ENCODE measurements at regions of chr6 and their contacts with region 1.

Region 1: GRCh38 chr6:112879920-112880413 is 532.8 kb downstream of the RFPL4B start:
- DNase-seq: no peak
- ATAC-seq: no peak
- H3K4me3 ChIP-seq: no peak overlapping the region
- H3K27ac ChIP-seq: no peak overlapping the region
- H3K4me1 ChIP-seq: peaks cover 11% of the 10 kb centered on the region
- H3K27me3 ChIP-seq: no peaks in the 10 kb centered on the region
- CTCF ChIP-seq: no peak
- POLR2A ChIP-seq: no peak
- RAD21 ChIP-seq: no peak

Region 2: DNA sequence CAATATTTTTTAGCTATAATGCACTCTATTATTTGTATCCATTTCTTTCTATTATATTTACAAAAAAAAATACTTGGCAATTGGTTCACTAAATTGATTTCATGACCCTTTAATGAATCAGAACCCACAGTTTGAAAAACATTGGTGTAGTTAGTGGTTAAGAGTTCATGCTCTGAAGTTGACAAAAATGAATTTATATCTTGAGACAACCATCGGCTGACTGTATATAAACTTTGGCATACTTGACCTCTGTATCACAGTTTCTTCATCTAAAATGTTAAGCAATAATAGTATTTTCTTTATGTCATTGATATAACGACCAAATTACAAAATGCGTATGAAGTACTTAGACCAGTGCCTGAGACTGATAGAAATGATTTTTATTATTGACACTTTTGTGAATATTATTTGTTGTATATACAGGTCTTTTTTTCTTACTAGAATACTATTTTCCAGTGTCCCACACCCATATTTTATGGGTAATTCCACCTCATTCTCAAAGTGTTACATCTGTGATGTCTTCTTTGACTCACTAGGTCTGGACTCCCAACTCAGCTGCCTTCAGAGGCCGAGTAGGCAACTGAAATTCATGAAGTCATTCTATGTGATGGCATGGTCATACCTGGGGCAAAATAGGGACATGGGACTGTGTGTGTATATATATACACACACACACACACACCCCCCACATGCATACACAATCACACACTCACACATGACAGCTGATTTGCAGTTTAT is 73.6 kb before region 1 on chr6:
- CTCF ChIA-PET with region 1: interaction called, 10 read pairs
- POLR2A ChIA-PET with region 1: no interaction called
- dilution Hi-C with region 1: no loop called
- in situ Hi-C with region 1: no loop called
- intact Hi-C with region 1: no loop called
- DNase-seq: peak; percentile 80
- ATAC-seq: peak; percentile 80
- H3K4me3 ChIP-seq: no peak overlapping the region
- H3K27ac ChIP-seq: peak overlapping the region; percentile 47; the same call in 1 of the 2 replicates
- H3K4me1 ChIP-seq: peaks cover 6% of the 10 kb centered on the region
- H3K27me3 ChIP-seq: no peaks in the 10 kb centered on the region
- CTCF ChIP-seq: no peak
- POLR2A ChIP-seq: no peak
- RAD21 ChIP-seq: no peak

Region 3: DNA sequence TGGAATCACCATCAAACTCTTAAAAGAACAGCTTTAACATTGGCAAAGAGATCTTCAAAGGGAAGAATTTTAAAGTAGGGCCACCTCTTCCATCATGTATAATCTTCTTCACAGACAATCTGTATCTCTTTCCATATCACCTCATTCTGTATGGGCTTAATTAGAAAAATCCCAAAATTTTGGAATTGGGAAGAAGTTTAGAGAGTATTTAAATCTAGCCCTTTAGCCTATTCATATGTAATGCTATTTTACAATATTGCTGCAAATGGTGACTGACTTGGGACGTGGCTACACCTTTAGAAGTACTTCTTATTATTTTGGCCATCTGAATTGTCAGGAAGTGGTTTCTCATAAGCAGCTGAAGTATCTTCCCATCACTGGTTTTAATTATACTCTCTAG is 58.5 kb before region 1 on chr6:
- CTCF ChIA-PET with region 1: no interaction called
- POLR2A ChIA-PET with region 1: no interaction called
- dilution Hi-C with region 1: no loop called
- in situ Hi-C with region 1: no loop called
- intact Hi-C with region 1: no loop called
- DNase-seq: no peak
- ATAC-seq: no peak
- H3K4me3 ChIP-seq: no peak overlapping the region
- H3K27ac ChIP-seq: no peak overlapping the region
- H3K4me1 ChIP-seq: no peaks in the 10 kb centered on the region
- H3K27me3 ChIP-seq: no peaks in the 10 kb centered on the region
- CTCF ChIP-seq: no peak
- POLR2A ChIP-seq: no peak
- RAD21 ChIP-seq: no peak

Region 4: DNA sequence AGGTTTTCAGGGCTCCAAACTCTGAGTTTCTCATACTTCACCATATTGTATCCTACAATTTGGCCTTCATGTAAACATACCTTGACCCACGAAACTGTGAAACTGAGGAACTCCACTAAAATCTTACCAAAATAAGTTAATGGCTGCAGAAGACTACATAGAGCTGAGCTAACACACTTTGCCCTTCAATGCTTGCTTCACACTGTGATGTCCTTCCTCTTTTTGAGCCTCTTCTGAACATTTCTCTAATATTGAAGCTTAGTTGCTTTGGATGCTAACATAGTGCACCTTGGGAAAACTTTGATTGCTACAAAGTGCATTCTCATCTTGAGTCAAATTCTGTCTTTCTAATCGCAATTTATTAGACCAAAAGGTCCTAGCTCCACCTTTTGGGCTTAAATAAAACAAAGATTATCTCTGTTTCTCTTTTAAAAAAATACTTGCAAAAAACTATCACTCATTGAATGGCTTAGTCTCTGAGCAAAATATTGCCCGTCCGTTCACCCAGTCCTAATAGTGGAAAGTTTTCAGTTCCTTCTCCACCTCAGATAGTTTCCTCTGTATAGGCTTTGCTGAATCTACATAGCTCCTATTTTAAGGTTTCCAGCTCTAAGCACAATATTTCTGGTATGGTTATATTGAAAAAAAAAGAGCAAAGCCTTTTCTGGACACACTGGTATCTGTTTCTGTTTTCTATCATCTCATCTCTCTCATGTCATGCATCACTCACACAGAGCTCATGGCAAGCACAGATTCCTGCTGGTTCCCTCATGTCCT is 38.2 kb before region 1 on chr6:
- CTCF ChIA-PET with region 1: no interaction called
- POLR2A ChIA-PET with region 1: interaction called, 3 read pairs
- dilution Hi-C with region 1: no loop called
- in situ Hi-C with region 1: no loop called
- intact Hi-C with region 1: loop called (anchors 5 kb)
- DNase-seq: no peak
- ATAC-seq: no peak
- H3K4me3 ChIP-seq: no peak overlapping the region
- H3K27ac ChIP-seq: no peak overlapping the region
- H3K4me1 ChIP-seq: peaks cover 4% of the 10 kb centered on the region
- H3K27me3 ChIP-seq: no peaks in the 10 kb centered on the region
- CTCF ChIP-seq: no peak
- POLR2A ChIP-seq: no peak
- RAD21 ChIP-seq: no peak

Region 5: DNA sequence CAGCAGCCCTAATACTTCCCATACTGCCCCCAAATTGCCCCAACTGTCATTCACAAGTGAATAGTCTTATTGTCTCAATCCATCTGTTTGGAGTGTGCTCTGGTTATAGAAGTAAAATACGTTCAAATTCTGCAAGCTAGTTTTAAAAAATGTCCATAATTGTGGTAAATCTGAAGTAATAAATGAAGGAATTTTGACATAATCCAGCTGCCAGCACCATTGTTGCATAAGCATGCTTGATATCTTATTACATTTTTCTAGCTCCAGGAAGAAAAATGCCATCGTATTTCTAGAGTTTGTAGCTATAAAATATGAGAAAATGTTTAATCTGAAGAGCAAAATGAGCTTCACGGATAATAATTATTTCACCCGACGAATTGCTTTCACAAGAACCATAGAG is 131.8 kb after region 1 on chr6:
- CTCF ChIA-PET with region 1: no interaction called
- POLR2A ChIA-PET with region 1: no interaction called
- dilution Hi-C with region 1: no loop called
- in situ Hi-C with region 1: no loop called
- intact Hi-C with region 1: loop called (anchors 5 kb)
- DNase-seq: peak; percentile 61
- ATAC-seq: no peak
- H3K4me3 ChIP-seq: no peak overlapping the region
- H3K27ac ChIP-seq: no peak overlapping the region
- H3K4me1 ChIP-seq: peaks cover 2% of the 10 kb centered on the region; the same call in 1 of the 2 replicates
- H3K27me3 ChIP-seq: no peaks in the 10 kb centered on the region
- CTCF ChIP-seq: no peak
- POLR2A ChIP-seq: no peak
- RAD21 ChIP-seq: no peak

Region 6: GRCh38 chr6:113414511-113414910 is 534.5 kb after region 1 on chr6:
- CTCF ChIA-PET with region 1: no interaction called
- POLR2A ChIA-PET with region 1: no interaction called
- dilution Hi-C with region 1: no loop called
- in situ Hi-C with region 1: no loop called
- intact Hi-C with region 1: loop called (anchors 10 kb)
- DNase-seq: peak; percentile 81
- ATAC-seq: peak; percentile 93
- H3K4me3 ChIP-seq: no peak overlapping the region
- H3K27ac ChIP-seq: no peak overlapping the region
- H3K4me1 ChIP-seq: peaks cover 4% of the 10 kb centered on the region; the same call in 1 of the 2 replicates
- H3K27me3 ChIP-seq: no peaks in the 10 kb centered on the region
- CTCF ChIP-seq: peak; percentile 68
- POLR2A ChIP-seq: no peak
- RAD21 ChIP-seq: peak; percentile 83

Measured in IMR-90 (cell line).